Naive thymus-derived CD4-positive, alpha-beta T cell (primary cell): ENCODE measurements at regions of chr1 and their contacts with region 1.

Region 1: GRCh38 chr1:55215256-55216021 is at the start of gene USP24:
- DNase-seq: peak; percentile 81 to 88 (median 86)
- ATAC-seq: peak; percentile 93
- H3K4me3 ChIP-seq: peak within 1 kb of the TSS; percentile 66
- H3K4me3 Mint-ChIP-seq: peak within 1 kb of the TSS; percentile 75 to 97 (median 95)
- H3K27ac ChIP-seq: peak within 1 kb of the TSS; percentile 93
- H3K27ac Mint-ChIP-seq: peak within 1 kb of the TSS; percentile 93 to 99 (median 98)
- H3K4me1 ChIP-seq: peaks cover 38 to 48% of the 10 kb centered on the region in 2 donors
- H3K4me1 Mint-ChIP-seq: peaks cover 55 to 75% (median 64%) of the 10 kb centered on the region in 7 donors
- H3K27me3 ChIP-seq: no peaks in the 10 kb centered on the region
- H3K27me3 Mint-ChIP-seq: no peaks in the 10 kb centered on the region
- total RNA-seq, gene USP24: 47.3 to 91.4 (median 75.4) TPM

Region 2: GRCh38 chr1:53220171-53220961 is 1995.1 kb before region 1 on chr1 and contains the start of gene CZIB:
- CTCF ChIA-PET with region 1: no interaction called
- POLR2A ChIA-PET with region 1: no interaction called
- intact Hi-C with region 1: loop called in 1 of 2 experiments (anchors 5 kb)
- DNase-seq: peak; percentile 85 to 97 (median 92)
- ATAC-seq: peak; percentile 97
- H3K4me3 ChIP-seq: peak within 1 kb of the TSS; percentile 80
- H3K4me3 Mint-ChIP-seq: peak within 1 kb of the TSS; percentile 83 to 94 (median 92)
- H3K27ac ChIP-seq: peak within 1 kb of the TSS; percentile 99
- H3K27ac Mint-ChIP-seq: peak within 1 kb of the TSS; percentile 91 to 98 (median 96)
- H3K4me1 ChIP-seq: peaks cover 15% of the 10 kb centered on the region in 2 donors
- H3K4me1 Mint-ChIP-seq: peaks cover 15 to 31% (median 26%) of the 10 kb centered on the region in 7 donors
- H3K27me3 ChIP-seq: no peaks in the 10 kb centered on the region
- H3K27me3 Mint-ChIP-seq: no peaks in the 10 kb centered on the region
- total RNA-seq, gene CZIB: 41.9 to 94.9 (median 51.4) TPM

Region 3: GRCh38 chr1:55081188-55081904 is 134.1 kb before region 1 on chr1:
- CTCF ChIA-PET with region 1: no interaction called
- POLR2A ChIA-PET with region 1: no interaction called
- intact Hi-C with region 1: no loop called
- DNase-seq: no peak
- ATAC-seq: no peak
- H3K4me3 ChIP-seq: no peak overlapping the region
- H3K4me3 Mint-ChIP-seq: no peak overlapping the region
- H3K27ac ChIP-seq: no peak overlapping the region
- H3K27ac Mint-ChIP-seq: peak overlapping the region in 3 of 9 donors; percentile 22 to 56 (median 54)
- H3K4me1 ChIP-seq: no peaks in the 10 kb centered on the region
- H3K4me1 Mint-ChIP-seq: no peaks in the 10 kb centered on the region
- H3K27me3 ChIP-seq: no peaks in the 10 kb centered on the region
- H3K27me3 Mint-ChIP-seq: no peaks in the 10 kb centered on the region

Region 4: DNA sequence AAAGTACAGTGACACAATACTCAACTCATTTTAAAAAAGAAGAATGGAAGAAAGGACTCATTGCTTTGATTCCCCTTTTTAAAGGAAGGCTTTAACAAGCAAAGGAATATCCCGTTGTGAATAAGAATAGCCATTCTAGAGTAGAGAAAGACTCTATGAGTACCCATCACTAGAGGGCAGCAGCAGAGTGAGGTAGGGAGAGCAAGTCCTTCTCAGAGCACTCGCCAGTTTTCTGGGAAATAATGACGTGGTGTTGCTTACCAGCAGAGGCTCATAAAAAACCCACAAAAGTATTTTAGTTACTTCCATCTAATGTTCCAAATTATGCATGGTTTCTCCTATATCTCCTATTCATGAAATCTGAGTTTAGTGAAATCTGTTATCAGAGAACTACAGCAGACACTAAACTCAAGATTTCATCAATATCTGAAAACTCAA is 74.9 kb before region 1 on chr1:
- CTCF ChIA-PET with region 1: interaction called, 5 read pairs
- POLR2A ChIA-PET with region 1: no interaction called
- intact Hi-C with region 1: loop called (anchors 1 kb)
- DNase-seq: peak in 8 of 9 donors; percentile 51 to 79 (median 71)
- ATAC-seq: peak; percentile 97
- H3K4me3 ChIP-seq: no peak overlapping the region
- H3K4me3 Mint-ChIP-seq: peak overlapping the region in 1 of 10 donors; percentile 53
- H3K27ac ChIP-seq: no peak overlapping the region
- H3K27ac Mint-ChIP-seq: peak overlapping the region in 8 of 9 donors; percentile 55 to 76 (median 65)
- H3K4me1 ChIP-seq: peaks cover 0 to 5% of the 10 kb centered on the region in 2 donors
- H3K4me1 Mint-ChIP-seq: peaks cover 0 to 18% (median 12%) of the 10 kb centered on the region in 7 donors
- H3K27me3 ChIP-seq: no peaks in the 10 kb centered on the region
- H3K27me3 Mint-ChIP-seq: no peaks in the 10 kb centered on the region

Region 5: DNA sequence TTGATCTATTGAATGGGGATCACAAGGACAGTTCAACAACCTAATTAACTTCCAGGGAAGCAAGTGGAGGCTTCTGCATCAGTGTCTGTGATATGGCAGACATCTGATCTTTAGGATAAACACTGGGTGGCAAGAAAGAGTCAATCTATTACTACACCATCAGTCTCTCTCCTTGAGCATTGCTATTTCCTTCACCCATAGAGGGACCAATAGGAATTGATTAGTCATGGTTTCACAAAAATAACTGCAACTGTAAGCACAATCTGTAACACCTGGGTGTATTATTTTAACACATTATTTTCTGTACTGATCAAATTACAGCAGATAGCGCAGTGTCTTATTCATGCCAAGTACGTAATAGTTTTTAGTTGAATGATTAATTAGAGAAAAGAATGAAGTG is 50.5 kb before region 1 on chr1:
- CTCF ChIA-PET with region 1: no interaction called
- POLR2A ChIA-PET with region 1: interaction called, 4 read pairs
- intact Hi-C with region 1: loop called in 1 of 2 experiments (anchors 5 kb)
- DNase-seq: no peak
- ATAC-seq: no peak
- H3K4me3 ChIP-seq: no peak overlapping the region
- H3K4me3 Mint-ChIP-seq: no peak overlapping the region
- H3K27ac ChIP-seq: no peak overlapping the region
- H3K27ac Mint-ChIP-seq: peak overlapping the region in 4 of 9 donors; percentile 7 to 48 (median 20)
- H3K4me1 ChIP-seq: no peaks in the 10 kb centered on the region
- H3K4me1 Mint-ChIP-seq: peaks cover 0 to 20% (median 18%) of the 10 kb centered on the region in 7 donors
- H3K27me3 ChIP-seq: no peaks in the 10 kb centered on the region
- H3K27me3 Mint-ChIP-seq: no peaks in the 10 kb centered on the region

Region 6: DNA sequence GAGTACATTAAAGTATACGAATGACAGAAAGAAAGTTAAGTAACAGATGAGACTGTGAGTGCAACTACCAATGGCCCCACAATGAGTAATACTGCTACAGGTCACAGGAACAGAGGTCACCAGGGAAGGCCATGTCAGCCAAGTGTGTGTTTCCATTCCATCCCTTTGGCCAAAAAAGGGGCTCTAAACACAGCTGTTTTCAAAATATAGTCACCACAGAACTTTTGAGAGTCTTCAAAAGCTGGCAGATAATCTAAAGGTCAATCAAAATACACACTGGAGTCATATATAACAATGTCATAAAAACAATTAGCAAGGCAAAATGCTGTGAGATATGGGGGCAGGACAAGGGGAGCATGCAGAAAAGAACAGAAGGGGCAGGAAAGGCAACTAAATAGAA is 10.4 kb before region 1 on chr1:
- CTCF ChIA-PET with region 1: interaction called, 3 read pairs
- POLR2A ChIA-PET with region 1: interaction called, 23 read pairs
- intact Hi-C with region 1: loop called in 1 of 2 experiments (anchors 1 kb)
- DNase-seq: no peak
- ATAC-seq: no peak
- H3K4me3 ChIP-seq: no peak overlapping the region
- H3K4me3 Mint-ChIP-seq: peak overlapping the region in 5 of 10 donors; percentile 1 to 48 (median 8)
- H3K27ac ChIP-seq: no peak overlapping the region
- H3K27ac Mint-ChIP-seq: peak overlapping the region in 7 of 9 donors; percentile 5 to 90 (median 41)
- H3K4me1 ChIP-seq: peaks cover 29 to 38% of the 10 kb centered on the region in 2 donors
- H3K4me1 Mint-ChIP-seq: peaks cover 56 to 94% (median 82%) of the 10 kb centered on the region in 7 donors
- H3K27me3 ChIP-seq: no peaks in the 10 kb centered on the region
- H3K27me3 Mint-ChIP-seq: no peaks in the 10 kb centered on the region

Region 7: DNA sequence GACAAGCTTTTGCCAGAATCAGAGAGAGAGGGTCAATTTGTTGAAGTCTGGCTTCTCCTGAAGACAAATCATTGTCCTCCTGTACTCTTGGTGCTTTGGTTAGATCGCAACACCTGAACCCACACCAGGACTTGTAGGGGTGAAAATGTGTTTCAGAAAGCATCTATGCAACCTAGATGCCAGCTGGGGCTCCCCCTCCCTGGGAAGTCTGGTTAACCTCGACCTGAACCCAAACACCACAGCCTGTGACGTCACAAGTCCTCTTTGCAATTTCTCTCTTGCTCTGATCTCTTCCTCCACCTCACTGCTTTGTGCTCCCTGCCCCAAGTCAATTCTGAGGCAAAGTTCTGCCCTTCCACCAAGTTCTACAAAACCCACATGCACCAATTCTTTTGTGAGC is 42.5 kb after region 1 on chr1:
- CTCF ChIA-PET with region 1: no interaction called
- POLR2A ChIA-PET with region 1: interaction called, 3 read pairs
- intact Hi-C with region 1: loop called (anchors 2 to 5 kb)
- DNase-seq: peak; percentile 19 to 73 (median 64)
- ATAC-seq: peak; percentile 92
- H3K4me3 ChIP-seq: no peak overlapping the region
- H3K4me3 Mint-ChIP-seq: peak overlapping the region in 2 of 10 donors; percentile 14 to 15
- H3K27ac ChIP-seq: no peak overlapping the region
- H3K27ac Mint-ChIP-seq: peak overlapping the region in 7 of 9 donors; percentile 20 to 80 (median 52)
- H3K4me1 ChIP-seq: peaks cover 0 to 10% of the 10 kb centered on the region in 2 donors
- H3K4me1 Mint-ChIP-seq: peaks cover 11 to 17% (median 14%) of the 10 kb centered on the region in 7 donors
- H3K27me3 ChIP-seq: no peaks in the 10 kb centered on the region
- H3K27me3 Mint-ChIP-seq: peaks cover 0 to 16% (median 0%) of the 10 kb centered on the region in 5 donors

Region 8: DNA sequence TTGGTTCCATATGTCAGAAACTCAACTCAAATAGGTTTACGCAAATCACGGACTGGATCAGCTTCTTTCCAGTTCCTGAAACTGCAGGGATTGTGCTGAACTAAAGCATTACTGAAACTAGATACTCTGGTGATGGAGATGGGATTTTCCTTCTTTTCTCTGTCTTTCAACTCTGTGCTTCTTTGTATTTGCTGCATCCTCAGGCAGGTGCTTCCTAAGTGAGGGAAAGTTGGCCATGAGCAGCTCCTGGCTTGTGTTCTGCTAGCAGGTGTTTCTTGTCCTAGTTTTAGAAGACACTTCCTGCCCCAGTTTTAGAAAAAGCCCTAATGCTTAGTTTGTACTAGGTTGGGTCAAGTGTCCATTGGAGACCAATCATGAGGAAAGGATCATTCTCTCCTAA is 86.5 kb after region 1 on chr1:
- CTCF ChIA-PET with region 1: no interaction called
- POLR2A ChIA-PET with region 1: no interaction called
- intact Hi-C with region 1: no loop called
- DNase-seq: no peak
- ATAC-seq: no peak
- H3K4me3 ChIP-seq: no peak overlapping the region
- H3K4me3 Mint-ChIP-seq: no peak overlapping the region
- H3K27ac ChIP-seq: no peak overlapping the region
- H3K27ac Mint-ChIP-seq: peak overlapping the region in 1 of 9 donors; percentile 3
- H3K4me1 ChIP-seq: no peaks in the 10 kb centered on the region
- H3K4me1 Mint-ChIP-seq: no peaks in the 10 kb centered on the region
- H3K27me3 ChIP-seq: no peaks in the 10 kb centered on the region
- H3K27me3 Mint-ChIP-seq: peaks cover 3 to 19% (median 7%) of the 10 kb centered on the region in 5 donors